ENCODE measurements at regions of chr16 and their contacts with region 1.

Region 1: GRCh38 chr16:73565262-73565661 is 517.3 kb upstream of the ZFHX3 start:
- DNase-seq: no peak
- H3K4me3 ChIP-seq: no peak overlapping the region
- H3K27ac ChIP-seq: no peak overlapping the region
- H3K4me1 ChIP-seq: no peaks in the 10 kb centered on the region
- H3K27me3 ChIP-seq: no peaks in the 10 kb centered on the region
- CTCF ChIP-seq: peak; percentile 45 to 60

Region 2: DNA sequence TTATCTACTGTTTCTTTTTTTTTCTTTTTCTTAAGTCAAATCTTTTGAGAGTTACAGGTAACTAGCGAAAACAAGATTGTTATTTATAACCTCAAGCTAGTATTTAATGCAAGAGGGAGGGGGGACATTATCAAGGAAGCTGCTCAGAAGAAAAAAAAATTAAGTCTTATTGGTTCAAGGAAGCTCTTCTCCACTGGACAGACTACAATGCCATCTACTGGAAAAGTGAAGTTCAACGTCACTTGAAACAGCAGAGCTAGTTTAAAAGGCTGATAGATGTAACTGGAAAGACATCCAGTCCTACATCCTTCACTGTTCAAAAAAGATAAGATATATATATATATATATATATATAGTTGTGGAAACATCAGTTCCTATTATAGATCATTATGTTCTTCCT is 313.3 kb after region 1 on chr16:
- intact Hi-C with region 1: loop called (anchors 2 kb)
- DNase-seq: no peak
- H3K4me3 ChIP-seq: no peak overlapping the region
- H3K27ac ChIP-seq: no peak overlapping the region
- H3K4me1 ChIP-seq: no peaks in the 10 kb centered on the region
- H3K27me3 ChIP-seq: no peaks in the 10 kb centered on the region
- CTCF ChIP-seq: peak; percentile 67 to 69